ENCODE measurements at regions of chr11 and their contacts with region 1.

Region 1: DNA sequence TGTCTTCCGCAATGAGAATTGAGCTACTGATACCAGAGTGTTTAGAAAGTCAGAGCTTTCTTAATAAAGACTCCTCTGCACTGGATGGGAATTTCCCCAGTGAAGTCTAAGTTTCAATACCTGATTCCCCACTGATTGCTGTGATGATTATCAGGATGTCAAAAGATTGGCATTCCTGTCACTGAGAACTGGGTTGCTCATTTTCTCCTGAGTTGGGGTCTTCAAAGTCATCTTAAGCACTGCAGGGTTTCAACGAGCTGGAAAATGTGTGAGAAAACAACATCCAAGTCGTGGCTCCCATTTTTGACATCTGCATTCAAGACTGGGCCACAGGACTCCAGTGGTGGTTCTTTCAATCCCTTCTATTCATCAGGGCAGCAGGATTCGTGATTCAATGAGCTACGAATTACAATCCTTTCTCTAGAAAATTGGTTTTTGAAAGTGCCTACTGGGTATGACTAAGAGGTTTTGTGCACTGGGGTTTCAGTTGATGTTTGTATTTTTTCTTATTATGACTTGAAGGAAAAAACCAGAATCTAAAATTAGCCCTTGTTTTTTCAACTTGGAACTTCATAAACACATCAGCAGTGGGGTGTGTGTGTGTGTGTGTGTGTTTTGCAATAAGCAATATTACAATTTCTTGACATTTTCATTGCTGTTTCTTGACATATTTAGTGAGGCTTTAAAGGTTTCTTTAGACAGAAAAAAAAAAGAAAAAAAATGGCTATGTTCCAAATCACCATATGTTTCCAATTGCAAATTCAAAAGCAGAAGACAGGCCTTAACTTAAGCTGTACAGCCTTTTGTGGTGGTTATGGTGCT is 233.0 kb downstream of the FAM76B start:
- DNase-seq: peak; percentile 75
- ATAC-seq: peak; percentile 91
- H3K4me3 ChIP-seq: peak overlapping the region; percentile 22; the same call in 1 of the 2 replicates
- H3K27ac ChIP-seq: peak overlapping the region; percentile 86
- H3K4me1 ChIP-seq: peaks cover 21% of the 10 kb centered on the region
- H3K27me3 ChIP-seq: no peaks in the 10 kb centered on the region
- CTCF ChIP-seq: no peak
- EP300 ChIP-seq: peak; percentile 88 to 89
- POLR2A ChIP-seq: no peak
- RAD21 ChIP-seq: no peak

Region 2: GRCh38 chr11:94593030-94593429 is 963.5 kb before region 1 on chr11:
- CTCF ChIA-PET with region 1: no interaction called
- POLR2A ChIA-PET with region 1: no interaction called
- RAD21 ChIA-PET with region 1: no interaction called
- SMC1A ChIA-PET with region 1: no interaction called
- in situ Hi-C with region 1: no loop called
- intact Hi-C with region 1: no loop called
- DNase-seq: no peak
- ATAC-seq: peak; percentile 82
- H3K4me3 ChIP-seq: no peak overlapping the region
- H3K27ac ChIP-seq: no peak overlapping the region
- H3K4me1 ChIP-seq: no peaks in the 10 kb centered on the region
- H3K27me3 ChIP-seq: no peaks in the 10 kb centered on the region
- CTCF ChIP-seq: no peak
- EP300 ChIP-seq: peak in 1 of 2 experiments; percentile 41; a peak in 1 of 4 replicates
- POLR2A ChIP-seq: no peak
- RAD21 ChIP-seq: no peak

Region 3: DNA sequence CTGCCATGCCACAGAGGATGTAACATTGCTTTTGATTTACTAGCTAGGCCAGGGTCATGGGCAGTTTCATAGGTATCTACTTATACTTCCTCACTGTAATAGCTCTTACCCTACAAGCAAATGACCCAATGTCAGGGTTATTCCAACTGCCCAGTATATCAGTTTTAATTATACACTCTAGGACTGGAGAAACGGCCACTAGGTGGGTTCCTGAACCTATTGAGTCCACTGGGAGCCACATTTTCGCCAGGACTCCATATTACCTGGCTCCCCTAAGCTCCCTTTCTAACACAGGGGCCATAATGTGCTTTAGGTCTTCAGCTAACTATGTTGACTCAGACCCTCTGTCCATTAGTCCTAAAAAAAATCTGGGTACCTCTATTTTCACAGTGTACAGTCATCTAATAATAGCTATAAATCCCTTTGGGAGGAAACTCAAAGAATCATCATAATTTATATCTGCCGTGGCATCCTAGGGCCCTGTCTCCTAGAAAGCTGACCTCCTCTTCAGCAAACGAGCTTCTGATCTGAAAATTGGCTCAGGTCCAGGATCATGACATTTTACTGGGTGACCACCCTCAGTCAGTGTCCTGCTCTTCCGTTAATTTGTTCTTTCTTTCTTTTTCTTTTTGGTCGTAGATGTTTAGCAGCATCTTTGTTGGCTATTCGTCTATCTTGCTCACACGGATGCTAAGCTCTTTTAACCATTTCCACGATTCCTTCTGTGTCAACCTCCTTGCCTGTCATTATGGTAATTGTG is 11.3 kb before region 1 on chr11:
- CTCF ChIA-PET with region 1: interaction called, 24 read pairs
- POLR2A ChIA-PET with region 1: interaction called, 9 read pairs
- RAD21 ChIA-PET with region 1: interaction called, 3 read pairs
- SMC1A ChIA-PET with region 1: interaction called, 55 read pairs
- in situ Hi-C with region 1: no loop called
- intact Hi-C with region 1: no loop called
- DNase-seq: no peak
- ATAC-seq: peak; percentile 62
- H3K4me3 ChIP-seq: no peak overlapping the region
- H3K27ac ChIP-seq: no peak overlapping the region
- H3K4me1 ChIP-seq: no peaks in the 10 kb centered on the region
- H3K27me3 ChIP-seq: no peaks in the 10 kb centered on the region; a peak in 1 of 4 replicates
- CTCF ChIP-seq: peak in 2 of 3 experiments; percentile 19 to 27; a peak in 2 of 6 replicates
- EP300 ChIP-seq: no peak
- POLR2A ChIP-seq: no peak
- RAD21 ChIP-seq: peak; percentile 30; the same call in 1 of the 2 replicates

Region 4: DNA sequence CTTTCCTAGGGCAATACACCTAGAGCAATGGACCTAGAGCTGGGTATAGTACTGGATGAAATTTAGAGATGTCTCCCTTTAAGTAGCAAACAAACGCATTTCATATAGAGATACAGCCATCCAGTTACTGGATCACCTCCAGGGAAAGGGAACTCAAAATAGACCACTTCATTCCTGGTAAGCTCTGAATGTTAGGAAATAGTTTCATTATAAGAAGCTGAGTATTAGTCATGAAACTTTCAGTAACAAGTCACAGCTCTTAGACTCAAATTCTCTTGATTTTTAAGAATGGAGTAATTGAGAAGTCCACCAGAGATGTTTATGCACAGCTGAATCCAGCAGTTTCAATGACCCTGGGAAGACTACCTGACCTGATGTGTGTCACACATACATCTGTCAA is 11.1 kb after region 1 on chr11:
- CTCF ChIA-PET with region 1: interaction called, 6 read pairs
- POLR2A ChIA-PET with region 1: interaction called, 5 read pairs
- RAD21 ChIA-PET with region 1: interaction called, 8 read pairs
- SMC1A ChIA-PET with region 1: interaction called, 22 read pairs
- in situ Hi-C with region 1: no loop called
- intact Hi-C with region 1: no loop called
- DNase-seq: no peak
- ATAC-seq: no peak
- H3K4me3 ChIP-seq: no peak overlapping the region
- H3K27ac ChIP-seq: no peak overlapping the region
- H3K4me1 ChIP-seq: no peaks in the 10 kb centered on the region
- H3K27me3 ChIP-seq: no peaks in the 10 kb centered on the region
- CTCF ChIP-seq: no peak
- EP300 ChIP-seq: no peak
- POLR2A ChIP-seq: no peak
- RAD21 ChIP-seq: no peak

Region 5: GRCh38 chr11:95577716-95578460 is 21.3 kb after region 1 on chr11:
- CTCF ChIA-PET with region 1: interaction called, 5 read pairs
- POLR2A ChIA-PET with region 1: interaction called, 11 read pairs
- RAD21 ChIA-PET with region 1: interaction called, 4 read pairs
- SMC1A ChIA-PET with region 1: interaction called, 27 read pairs
- in situ Hi-C with region 1: no loop called
- intact Hi-C with region 1: no loop called
- DNase-seq: no peak
- ATAC-seq: peak; percentile 85
- H3K4me3 ChIP-seq: no peak overlapping the region
- H3K27ac ChIP-seq: no peak overlapping the region
- H3K4me1 ChIP-seq: no peaks in the 10 kb centered on the region
- H3K27me3 ChIP-seq: no peaks in the 10 kb centered on the region
- CTCF ChIP-seq: peak; percentile 10 to 23 (median 11); a peak in 2 of 6 replicates
- EP300 ChIP-seq: no peak
- POLR2A ChIP-seq: no peak
- RAD21 ChIP-seq: peak; percentile 45; the same call in 1 of the 2 replicates

Region 6: DNA sequence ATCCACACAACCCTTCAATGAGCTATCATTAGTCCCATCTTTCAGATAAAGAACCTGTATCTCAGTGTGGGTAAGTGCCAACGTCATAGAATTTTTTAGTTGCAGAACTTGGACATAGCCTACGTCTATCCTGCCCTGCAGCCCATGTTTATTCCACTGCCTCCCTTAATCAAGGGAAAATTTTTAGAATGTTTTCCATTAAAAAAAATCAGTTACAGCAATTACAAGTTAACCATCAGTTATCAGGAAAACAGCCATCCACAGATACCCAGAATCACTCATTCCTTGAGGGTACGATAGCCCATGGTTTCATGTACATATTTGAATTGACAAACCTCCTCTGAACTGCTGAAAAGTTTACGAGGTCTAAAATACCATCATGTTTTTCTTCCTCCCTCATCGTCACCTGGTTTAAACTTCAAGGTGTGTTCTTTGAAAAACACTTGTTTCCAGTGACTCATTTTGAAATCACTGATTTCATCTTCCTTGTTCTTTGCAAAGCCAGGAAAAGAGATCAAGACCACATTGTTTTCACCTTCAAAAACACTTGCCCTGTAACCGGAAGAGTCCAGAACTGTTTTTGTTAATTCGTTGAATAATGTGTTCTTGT is 132.1 kb after region 1 on chr11:
- CTCF ChIA-PET with region 1: no interaction called
- POLR2A ChIA-PET with region 1: no interaction called
- RAD21 ChIA-PET with region 1: no interaction called
- SMC1A ChIA-PET with region 1: interaction called, 3 read pairs
- in situ Hi-C with region 1: no loop called
- intact Hi-C with region 1: loop called (anchors 5 kb)
- DNase-seq: no peak
- ATAC-seq: peak; percentile 57
- H3K4me3 ChIP-seq: no peak overlapping the region
- H3K27ac ChIP-seq: no peak overlapping the region
- H3K4me1 ChIP-seq: no peaks in the 10 kb centered on the region
- H3K27me3 ChIP-seq: no peaks in the 10 kb centered on the region; a peak in 1 of 4 replicates
- CTCF ChIP-seq: no peak
- EP300 ChIP-seq: no peak
- POLR2A ChIP-seq: no peak
- RAD21 ChIP-seq: no peak

Measured in GM12878 (cell line).